Activated B cell treated with CpG ODN at 0.5 μM for 24 hours (primary cell): ENCODE measurements at regions of chr22 and their contacts with region 1.

Region 1: GRCh38 chr22:20981787-20982562 is at the start of gene LZTR1:
- DNase-seq: peak; percentile 74
- ATAC-seq: peak; percentile 80
- H3K4me3 Mint-ChIP-seq: peak within 1 kb of the TSS; percentile 93
- H3K27ac Mint-ChIP-seq: peak within 1 kb of the TSS; percentile 88
- H3K4me1 Mint-ChIP-seq: peaks cover 31% of the 10 kb centered on the region
- H3K27me3 Mint-ChIP-seq: no peaks in the 10 kb centered on the region
- CTCF ChIP-seq: no peak
- total RNA-seq, gene LZTR1: 79.2 and 89.3 TPM in 2 replicates

Region 2: GRCh38 chr22:20965104-20965887 is 16.7 kb before region 1 on chr22:
- CTCF ChIA-PET with region 1: interaction called, 3 read pairs
- POLR2A ChIA-PET with region 1: interaction called, 12 read pairs
- intact Hi-C with region 1: no loop called
- DNase-seq: no peak
- ATAC-seq: peak; percentile 43
- H3K4me3 Mint-ChIP-seq: peak overlapping the region; percentile 61
- H3K27ac Mint-ChIP-seq: no peak overlapping the region
- H3K4me1 Mint-ChIP-seq: peaks cover 49% of the 10 kb centered on the region
- H3K27me3 Mint-ChIP-seq: peaks cover 5% of the 10 kb centered on the region
- CTCF ChIP-seq: no peak

Region 3: GRCh38 chr22:20970939-20971657 is 10.9 kb before region 1 on chr22:
- CTCF ChIA-PET with region 1: interaction called, 3 read pairs
- POLR2A ChIA-PET with region 1: interaction called, 12 read pairs
- intact Hi-C with region 1: no loop called
- DNase-seq: no peak
- ATAC-seq: no peak
- H3K4me3 Mint-ChIP-seq: no peak overlapping the region
- H3K27ac Mint-ChIP-seq: peak overlapping the region; percentile 16
- H3K4me1 Mint-ChIP-seq: peaks cover 42% of the 10 kb centered on the region
- H3K27me3 Mint-ChIP-seq: no peaks in the 10 kb centered on the region
- CTCF ChIP-seq: no peak

Region 4: DNA sequence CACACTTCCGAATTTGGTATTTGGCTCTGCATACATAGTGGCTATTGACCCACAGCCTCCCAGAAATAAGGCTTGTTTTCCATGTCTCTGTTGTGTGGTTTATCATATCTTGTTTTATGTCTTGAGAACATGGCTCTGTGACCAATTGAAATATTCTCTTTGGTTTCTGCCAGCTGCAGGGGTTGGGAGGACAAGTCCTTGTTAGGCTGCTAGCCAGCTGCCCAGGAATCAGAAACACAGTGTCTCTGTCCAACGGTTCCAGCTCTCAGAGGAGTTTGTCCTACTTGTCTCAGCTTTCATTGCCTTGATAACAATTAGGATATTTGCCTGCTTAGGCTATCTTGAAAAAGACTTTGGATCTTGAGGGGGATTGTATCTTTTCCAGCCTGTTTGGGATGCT is 56.4 kb after region 1 on chr22:
- CTCF ChIA-PET with region 1: no interaction called
- POLR2A ChIA-PET with region 1: no interaction called
- intact Hi-C with region 1: no loop called
- DNase-seq: no peak
- ATAC-seq: no peak
- H3K4me3 Mint-ChIP-seq: no peak overlapping the region
- H3K27ac Mint-ChIP-seq: no peak overlapping the region
- H3K4me1 Mint-ChIP-seq: peaks cover 3% of the 10 kb centered on the region
- H3K27me3 Mint-ChIP-seq: peaks cover 21% of the 10 kb centered on the region
- CTCF ChIP-seq: no peak

Region 5: DNA sequence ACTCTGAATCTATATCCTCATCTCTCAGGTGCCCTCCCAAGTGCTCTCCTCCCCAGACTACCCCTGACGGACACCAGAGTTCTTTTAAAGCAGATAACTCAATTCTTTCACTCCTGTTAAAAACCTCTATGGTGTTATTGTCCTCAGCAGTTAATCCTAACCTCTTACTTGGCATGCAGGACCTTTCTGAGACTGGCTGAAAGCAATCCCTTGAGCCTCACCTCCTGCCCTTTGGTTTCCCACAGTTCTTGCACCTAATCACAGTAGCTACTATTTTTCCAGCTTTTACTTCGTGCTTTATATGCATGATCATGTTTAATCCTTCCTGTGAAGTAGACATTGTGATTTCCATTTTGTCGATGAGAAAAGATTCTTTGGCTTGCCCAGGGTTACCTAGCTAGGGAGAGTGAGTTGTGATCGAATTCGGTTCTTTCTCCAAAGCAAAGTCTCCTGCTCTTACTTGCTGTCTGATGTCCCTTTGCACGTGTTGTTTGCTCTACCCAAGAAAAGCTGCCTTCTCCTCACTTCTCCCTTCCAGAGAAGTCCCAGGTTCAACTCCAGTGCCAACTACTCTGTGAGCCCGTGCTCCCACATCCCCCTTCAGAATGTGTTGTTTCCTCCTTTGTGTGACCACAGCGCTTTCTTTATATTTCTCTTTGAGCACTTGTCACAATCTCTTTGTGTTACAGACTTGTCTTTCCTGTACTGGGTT is 587.6 kb after region 1 on chr22:
- CTCF ChIA-PET with region 1: no interaction called
- POLR2A ChIA-PET with region 1: no interaction called
- intact Hi-C with region 1: no loop called
- DNase-seq: no peak
- ATAC-seq: no peak
- H3K4me3 Mint-ChIP-seq: peak overlapping the region; percentile 89
- H3K27ac Mint-ChIP-seq: peak overlapping the region; percentile 15
- H3K4me1 Mint-ChIP-seq: peaks cover 57% of the 10 kb centered on the region
- H3K27me3 Mint-ChIP-seq: no peaks in the 10 kb centered on the region
- CTCF ChIP-seq: no peak

Region 6: GRCh38 chr22:21690401-21690801 is 708.4 kb after region 1 on chr22:
- CTCF ChIA-PET with region 1: no interaction called
- POLR2A ChIA-PET with region 1: no interaction called
- intact Hi-C with region 1: no loop called
- DNase-seq: no peak
- ATAC-seq: no peak
- H3K4me3 Mint-ChIP-seq: no peak overlapping the region
- H3K27ac Mint-ChIP-seq: peak overlapping the region; percentile 36
- H3K4me1 Mint-ChIP-seq: peaks cover 14% of the 10 kb centered on the region
- H3K27me3 Mint-ChIP-seq: no peaks in the 10 kb centered on the region
- CTCF ChIP-seq: no peak